Caco-2 (cell line): ENCODE measurements at regions of chrX and their contacts with region 1.

Region 1: GRCh38 chrX:67651437-67652142 is 107.8 kb downstream of the AR start:
- DNase-seq: no peak
- H3K4me3 ChIP-seq: no peak overlapping the region
- H3K4me3 Mint-ChIP-seq: no peak overlapping the region
- H3K27ac Mint-ChIP-seq: no peak overlapping the region
- H3K4me1 ChIP-seq: no peaks in the 10 kb centered on the region
- H3K4me1 Mint-ChIP-seq: no peaks in the 10 kb centered on the region
- H3K27me3 ChIP-seq: no peaks in the 10 kb centered on the region
- H3K27me3 Mint-ChIP-seq: no peaks in the 10 kb centered on the region
- CTCF ChIP-seq: no peak

Region 2: DNA sequence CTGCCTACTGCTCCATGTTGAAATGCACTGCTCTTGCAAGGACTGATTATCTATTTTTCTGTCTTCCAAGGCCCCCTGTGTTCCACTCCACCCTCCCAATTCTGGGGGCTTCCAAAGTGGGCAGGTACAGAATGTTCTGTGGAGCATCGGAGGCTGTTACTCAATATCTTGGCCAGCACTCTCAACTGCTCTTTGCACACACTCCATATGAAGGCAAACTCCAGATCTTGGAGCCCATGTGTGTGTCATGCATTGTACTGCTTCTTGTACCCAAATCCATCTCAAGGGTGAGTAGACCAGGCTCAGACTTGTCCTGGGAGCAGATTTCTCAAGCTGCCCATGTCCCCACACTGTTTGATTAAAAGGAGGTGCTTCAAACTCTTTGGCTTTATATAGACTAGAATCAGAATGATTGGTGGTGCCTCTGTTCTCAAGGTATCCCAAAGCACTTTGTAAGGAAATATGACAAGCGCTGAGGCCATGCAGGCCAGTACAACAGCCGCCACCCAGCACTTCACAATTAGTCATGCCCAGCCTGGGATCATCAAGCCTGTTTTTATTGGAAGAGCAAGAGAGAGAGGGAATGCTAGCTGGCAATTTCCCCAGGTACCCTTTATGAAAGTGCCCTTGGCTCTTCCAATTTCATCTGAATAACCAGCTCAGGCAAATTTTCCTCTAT is 63.5 kb before region 1 on chrX:
- CTCF ChIA-PET with region 1: no interaction called
- POLR2A ChIA-PET with region 1: no interaction called
- intact Hi-C with region 1: loop called (anchors 5 kb)
- DNase-seq: no peak
- H3K4me3 ChIP-seq: no peak overlapping the region
- H3K4me3 Mint-ChIP-seq: no peak overlapping the region
- H3K27ac Mint-ChIP-seq: no peak overlapping the region
- H3K4me1 ChIP-seq: no peaks in the 10 kb centered on the region
- H3K4me1 Mint-ChIP-seq: no peaks in the 10 kb centered on the region
- H3K27me3 ChIP-seq: no peaks in the 10 kb centered on the region
- H3K27me3 Mint-ChIP-seq: no peaks in the 10 kb centered on the region
- CTCF ChIP-seq: no peak

Region 3: GRCh38 chrX:67601771-67602170 is 49.8 kb before region 1 on chrX:
- CTCF ChIA-PET with region 1: no interaction called
- POLR2A ChIA-PET with region 1: no interaction called
- intact Hi-C with region 1: no loop called
- DNase-seq: no peak
- H3K4me3 ChIP-seq: no peak overlapping the region
- H3K4me3 Mint-ChIP-seq: no peak overlapping the region
- H3K27ac Mint-ChIP-seq: no peak overlapping the region
- H3K4me1 ChIP-seq: no peaks in the 10 kb centered on the region
- H3K4me1 Mint-ChIP-seq: no peaks in the 10 kb centered on the region
- H3K27me3 ChIP-seq: no peaks in the 10 kb centered on the region
- H3K27me3 Mint-ChIP-seq: no peaks in the 10 kb centered on the region
- CTCF ChIP-seq: no peak

Region 4: DNA sequence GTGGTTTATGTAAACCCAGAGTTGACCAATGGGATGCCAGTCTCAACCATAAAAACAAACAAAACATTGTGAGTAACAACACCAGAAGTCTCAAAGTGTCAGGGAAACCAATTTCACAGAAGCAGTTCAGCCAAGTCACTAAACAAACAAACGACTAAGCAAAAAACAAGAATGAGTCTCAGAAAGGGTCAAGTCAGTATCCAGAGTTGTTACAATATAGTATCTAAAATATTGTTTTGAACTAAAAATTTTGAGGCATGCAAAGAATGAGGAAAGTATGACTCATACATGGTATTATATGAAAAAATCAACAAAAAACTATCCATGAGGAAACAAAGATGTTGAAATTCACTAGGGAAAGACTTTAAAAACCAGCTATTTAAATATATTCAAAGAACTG is 37.2 kb before region 1 on chrX:
- CTCF ChIA-PET with region 1: interaction called, 3 read pairs
- POLR2A ChIA-PET with region 1: no interaction called
- intact Hi-C with region 1: loop called (anchors 5 kb)
- DNase-seq: no peak
- H3K4me3 ChIP-seq: no peak overlapping the region
- H3K4me3 Mint-ChIP-seq: no peak overlapping the region
- H3K27ac Mint-ChIP-seq: no peak overlapping the region
- H3K4me1 ChIP-seq: no peaks in the 10 kb centered on the region
- H3K4me1 Mint-ChIP-seq: no peaks in the 10 kb centered on the region
- H3K27me3 ChIP-seq: no peaks in the 10 kb centered on the region
- H3K27me3 Mint-ChIP-seq: no peaks in the 10 kb centered on the region
- CTCF ChIP-seq: no peak

Region 5: DNA sequence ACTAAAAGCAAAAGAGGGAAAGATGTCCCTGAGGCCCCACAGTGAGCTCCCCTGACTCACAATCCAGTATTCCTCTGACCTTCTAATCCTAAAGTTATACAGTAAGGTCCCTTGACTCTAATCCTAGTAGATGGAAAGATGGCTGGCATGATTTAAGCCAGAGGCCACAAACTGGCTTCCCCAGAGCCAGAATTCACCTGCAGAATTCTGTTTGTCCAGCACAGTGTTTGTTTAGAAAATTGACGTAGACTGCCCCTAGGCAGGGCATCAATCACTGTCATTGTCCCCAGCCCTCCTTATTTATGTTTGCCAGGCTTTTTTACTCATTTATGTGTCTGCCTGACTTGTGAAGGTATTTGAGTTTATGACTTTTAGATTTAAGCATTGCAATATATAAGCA is 46.6 kb after region 1 on chrX:
- CTCF ChIA-PET with region 1: no interaction called
- POLR2A ChIA-PET with region 1: no interaction called
- intact Hi-C with region 1: loop called (anchors 2 kb)
- DNase-seq: peak in 1 of 2 experiments; percentile 17
- H3K4me3 ChIP-seq: no peak overlapping the region
- H3K4me3 Mint-ChIP-seq: no peak overlapping the region
- H3K27ac Mint-ChIP-seq: no peak overlapping the region
- H3K4me1 ChIP-seq: no peaks in the 10 kb centered on the region
- H3K4me1 Mint-ChIP-seq: no peaks in the 10 kb centered on the region
- H3K27me3 ChIP-seq: no peaks in the 10 kb centered on the region
- H3K27me3 Mint-ChIP-seq: no peaks in the 10 kb centered on the region
- CTCF ChIP-seq: no peak